Activated T-helper 2 cell treated with anti-CD3 and anti-CD28 coated beads, Interferon-gamma antibody, Interleukin-2, Interleukin-4, amounts not matched to agents 10 μg/mL and 5 μg/mL and 100 μg/mL, durations not matched to agents 14 hours and 24 hours and 36 hours (primary cell): ENCODE measurements at regions of chr6 and their contacts with region 1.

Region 1: GRCh38 chr6:136249811-136250685 is at the start of gene MTFR2:
- DNase-seq: peak; percentile 95
- H3K4me3 Mint-ChIP-seq: peak within 1 kb of the TSS; percentile 94
- H3K27ac Mint-ChIP-seq: peak within 1 kb of the TSS; percentile 91
- H3K4me1 Mint-ChIP-seq: peaks cover 51% of the 10 kb centered on the region
- H3K27me3 Mint-ChIP-seq: no peaks in the 10 kb centered on the region
- total RNA-seq, gene MTFR2: 18.4 and 20.8 TPM in 2 replicates

Region 2: DNA sequence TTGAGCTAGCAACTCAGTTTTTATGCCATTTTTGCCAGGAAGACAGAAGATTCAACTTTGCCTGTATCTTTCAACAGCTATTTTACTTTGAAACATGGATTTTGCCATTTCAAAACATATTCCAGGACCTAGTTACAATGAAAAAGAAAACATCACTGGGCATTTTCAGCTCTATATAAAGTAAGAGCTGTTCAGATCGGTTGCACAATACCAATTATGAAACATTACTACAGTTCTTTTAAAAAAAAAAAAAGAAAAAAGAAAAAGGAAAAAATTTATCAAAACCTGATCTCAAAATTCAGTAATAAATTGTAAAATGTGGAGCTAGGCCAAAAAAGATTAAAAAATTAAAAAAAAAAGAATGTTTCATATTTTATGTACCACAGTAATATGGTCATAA is 24.0 kb after region 1 on chr6:
- intact Hi-C with region 1: loop called (anchors 2 kb)
- DNase-seq: no peak
- H3K4me3 Mint-ChIP-seq: no peak overlapping the region
- H3K27ac Mint-ChIP-seq: no peak overlapping the region
- H3K4me1 Mint-ChIP-seq: peaks cover 20% of the 10 kb centered on the region
- H3K27me3 Mint-ChIP-seq: no peaks in the 10 kb centered on the region

Region 3: DNA sequence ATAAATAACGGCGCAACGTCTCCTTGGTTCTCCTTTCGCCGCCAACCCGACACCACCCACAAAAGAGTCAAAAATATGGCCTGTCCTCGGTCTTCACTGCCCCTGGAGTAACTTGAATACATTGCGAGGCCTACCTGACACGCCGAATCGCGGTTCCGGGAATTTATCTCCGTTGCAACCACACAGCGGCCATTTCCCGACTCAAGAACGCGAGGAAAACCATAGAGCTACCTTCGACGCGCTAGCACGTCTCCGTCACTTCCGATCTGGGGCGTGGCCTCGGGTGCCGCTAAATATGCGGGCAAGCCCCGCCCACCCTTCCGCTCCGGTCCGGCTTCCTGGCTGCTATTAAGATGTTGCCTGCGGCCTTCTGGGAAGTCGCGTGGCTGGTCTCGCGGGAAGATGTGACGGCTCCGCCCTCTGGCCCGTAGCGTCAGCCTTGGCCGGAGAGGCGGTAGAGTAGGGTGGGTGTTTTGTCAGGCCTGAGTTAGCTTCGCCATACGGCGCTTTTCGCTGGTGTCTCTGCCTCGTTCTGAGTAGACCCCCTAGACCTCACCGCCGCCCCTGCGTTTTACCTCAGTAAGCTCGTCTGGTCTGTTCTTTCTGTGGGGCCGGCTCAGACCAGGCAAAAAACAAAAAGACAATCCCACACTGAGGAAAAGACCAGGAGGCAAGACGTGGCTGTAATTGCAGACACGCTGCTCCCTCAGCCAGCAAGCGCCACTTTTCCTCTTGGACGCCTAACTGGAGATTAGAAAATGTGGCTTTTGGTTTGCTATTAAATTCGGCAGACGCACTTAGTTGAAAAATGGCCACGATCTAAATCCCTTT is 39.7 kb after region 1 on chr6 and contains the start of gene BCLAF1:
- intact Hi-C with region 1: loop called (anchors 1 kb)
- DNase-seq: peak; percentile 100
- H3K4me3 Mint-ChIP-seq: peak within 1 kb of the TSS; percentile 100
- H3K27ac Mint-ChIP-seq: peak within 1 kb of the TSS; percentile 100
- H3K4me1 Mint-ChIP-seq: peaks cover 32% of the 10 kb centered on the region
- H3K27me3 Mint-ChIP-seq: no peaks in the 10 kb centered on the region
- total RNA-seq, gene BCLAF1: 228 and 242 TPM in 2 replicates

Region 4: GRCh38 chr6:136429264-136430065 is 179.4 kb after region 1 on chr6:
- intact Hi-C with region 1: no loop called
- DNase-seq: no peak
- H3K4me3 Mint-ChIP-seq: no peak overlapping the region
- H3K27ac Mint-ChIP-seq: no peak overlapping the region
- H3K4me1 Mint-ChIP-seq: no peaks in the 10 kb centered on the region
- H3K27me3 Mint-ChIP-seq: peaks cover 24% of the 10 kb centered on the region